Panc1 (cell line): ENCODE measurements at regions of chr19 and their contacts with region 1.

Region 1: DNA sequence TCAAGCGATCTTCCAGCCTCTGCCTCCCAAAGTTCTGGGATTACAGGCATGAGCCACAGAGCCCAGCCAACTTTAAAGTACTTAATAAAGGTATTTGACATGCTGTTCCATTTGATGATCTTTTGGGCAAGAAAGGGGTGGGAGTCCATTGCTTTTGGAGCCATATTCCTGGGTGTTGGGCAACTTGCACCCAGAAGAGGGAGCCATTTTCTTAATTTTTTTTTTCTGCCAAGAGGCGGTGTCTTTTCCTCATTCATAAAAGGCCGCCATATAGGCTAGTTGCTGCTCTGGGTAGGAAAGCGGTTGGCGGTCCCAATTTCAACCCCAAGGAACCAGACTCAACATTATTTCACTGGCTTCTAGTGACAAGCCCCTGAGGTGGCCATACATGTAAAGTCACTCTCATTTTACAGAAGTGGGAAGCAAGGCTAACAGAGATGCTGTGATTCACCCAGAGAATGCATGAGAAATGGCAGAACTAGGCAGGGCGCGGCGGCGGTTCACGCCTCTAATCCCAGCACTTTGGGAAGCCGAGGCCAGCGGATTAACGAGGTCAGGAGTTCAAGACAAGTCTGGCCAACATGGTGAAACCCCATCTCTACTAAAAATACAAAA is 139.6 kb downstream of the CACNA1A start:
- DNase-seq: no peak
- ATAC-seq: peak; percentile 34; the same call in 1 of the 2 replicates
- H3K4me3 ChIP-seq: no peak overlapping the region
- H3K27ac ChIP-seq: no peak overlapping the region
- H3K4me1 ChIP-seq: no peaks in the 10 kb centered on the region
- H3K27me3 ChIP-seq: no peaks in the 10 kb centered on the region
- CTCF ChIP-seq: peak; percentile 68

Region 2: DNA sequence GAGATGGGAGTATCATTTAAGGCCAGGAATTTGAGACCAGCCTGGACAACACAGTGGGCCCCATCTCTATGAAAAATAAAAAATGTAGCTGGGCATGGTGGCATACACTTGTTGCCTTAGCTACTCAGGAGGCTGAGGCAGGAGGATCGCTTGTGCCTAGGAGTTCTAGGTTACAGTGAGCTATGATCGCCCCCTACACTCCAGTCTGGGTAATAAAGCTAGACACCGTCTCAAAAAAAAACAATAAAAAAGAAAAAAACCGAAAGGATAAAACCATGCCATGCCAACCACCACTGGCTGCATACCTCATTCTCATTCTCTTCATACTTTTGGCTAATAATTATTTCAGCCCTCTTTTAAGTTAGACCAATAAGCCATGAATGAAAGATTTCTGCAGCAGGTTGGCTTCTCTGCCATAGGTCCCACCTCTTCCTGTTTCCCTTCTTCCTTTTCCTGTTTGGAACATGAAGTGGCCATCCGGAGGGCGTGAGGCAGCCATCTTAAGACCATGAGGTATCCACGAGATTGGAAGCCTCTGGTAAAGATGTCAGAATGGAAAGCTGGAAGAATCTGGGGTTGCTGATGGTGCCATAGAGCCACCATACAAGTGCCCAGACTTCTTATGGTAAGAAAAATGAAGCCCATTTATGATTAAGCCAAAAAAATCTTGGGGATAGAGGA is 31.7 kb before region 1 on chr19:
- CTCF ChIA-PET with region 1: no interaction called
- POLR2A ChIA-PET with region 1: no interaction called
- in situ Hi-C with region 1: no loop called
- intact Hi-C with region 1: no loop called
- DNase-seq: no peak
- ATAC-seq: no peak
- H3K4me3 ChIP-seq: no peak overlapping the region
- H3K27ac ChIP-seq: no peak overlapping the region
- H3K4me1 ChIP-seq: no peaks in the 10 kb centered on the region
- H3K27me3 ChIP-seq: no peaks in the 10 kb centered on the region
- CTCF ChIP-seq: no peak

Region 3: DNA sequence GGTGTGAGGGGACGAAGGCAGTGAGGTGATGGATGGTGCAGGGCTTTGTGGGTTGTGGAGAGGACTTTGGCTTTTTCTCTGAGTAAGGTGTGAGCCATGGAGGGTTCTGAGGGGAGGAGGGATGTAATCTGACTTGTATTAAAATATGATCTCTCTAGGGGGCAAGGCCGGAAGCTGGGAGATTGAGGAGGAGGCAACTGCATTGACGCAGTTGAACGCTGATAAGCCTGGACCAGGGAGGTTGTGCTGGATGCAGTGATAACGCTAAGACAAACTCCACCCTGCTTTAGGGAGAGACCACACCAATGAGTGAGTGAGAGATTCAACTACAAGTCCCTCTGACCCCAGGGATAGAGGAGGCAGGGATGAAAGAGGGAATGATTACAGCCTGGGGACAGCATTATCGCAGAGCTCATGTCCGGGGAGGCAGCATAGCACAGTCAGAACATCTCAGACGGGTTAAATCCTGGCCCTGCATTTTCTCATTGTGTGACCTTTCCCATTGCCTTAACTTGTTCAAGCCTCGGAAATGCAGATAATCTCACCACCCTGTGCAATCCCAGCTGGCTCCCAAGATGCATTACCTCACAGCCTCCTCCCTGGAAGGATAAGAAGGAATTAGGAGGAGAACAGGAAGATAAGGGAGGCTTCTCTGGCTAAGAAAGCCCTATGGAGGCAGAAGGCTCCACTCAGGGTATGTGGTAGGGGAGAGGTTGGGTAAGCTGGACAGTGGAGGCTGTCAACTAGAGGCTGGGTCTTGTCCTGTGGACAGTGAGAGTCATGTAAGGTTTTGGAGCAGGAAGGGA is 15.4 kb after region 1 on chr19:
- CTCF ChIA-PET with region 1: no interaction called
- POLR2A ChIA-PET with region 1: no interaction called
- in situ Hi-C with region 1: no loop called
- intact Hi-C with region 1: no loop called
- DNase-seq: no peak
- ATAC-seq: no peak
- H3K4me3 ChIP-seq: no peak overlapping the region
- H3K27ac ChIP-seq: no peak overlapping the region
- H3K4me1 ChIP-seq: no peaks in the 10 kb centered on the region
- H3K27me3 ChIP-seq: no peaks in the 10 kb centered on the region
- CTCF ChIP-seq: no peak

Region 4: DNA sequence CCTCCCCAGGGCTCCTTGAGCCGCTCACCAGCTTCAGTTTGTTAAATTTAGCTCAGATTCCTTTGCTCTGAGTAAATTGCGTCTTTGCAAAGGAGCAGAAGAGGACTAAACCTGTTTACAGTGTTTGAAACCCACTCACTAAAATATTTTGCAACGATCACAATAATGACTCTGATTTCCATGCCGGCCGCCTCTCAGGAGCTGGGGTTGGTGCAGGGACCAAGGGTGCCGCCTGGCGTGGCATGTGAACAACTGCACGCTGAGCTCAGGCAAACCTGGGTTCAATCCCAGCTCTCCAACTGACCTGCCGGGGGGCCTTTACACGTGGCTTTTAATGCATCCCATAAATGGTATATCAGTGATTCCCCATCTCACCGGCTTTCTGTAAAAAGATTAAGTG is 208.3 kb after region 1 on chr19:
- CTCF ChIA-PET with region 1: interaction called, 7 read pairs
- POLR2A ChIA-PET with region 1: no interaction called
- in situ Hi-C with region 1: no loop called
- intact Hi-C with region 1: loop called (anchors 10 kb)
- DNase-seq: no peak
- ATAC-seq: peak; percentile 75; the same call in 1 of the 2 replicates
- H3K4me3 ChIP-seq: no peak overlapping the region
- H3K27ac ChIP-seq: no peak overlapping the region
- H3K4me1 ChIP-seq: no peaks in the 10 kb centered on the region
- H3K27me3 ChIP-seq: no peaks in the 10 kb centered on the region
- CTCF ChIP-seq: peak; percentile 82